ENCODE measurements at regions of chr1 and their contacts with region 1.

Region 1: GRCh38 chr1:63917571-63918417 is 144.0 kb downstream of the ROR1 start:
- DNase-seq: no peak
- H3K4me3 ChIP-seq: no peak overlapping the region
- H3K27ac ChIP-seq: no peak overlapping the region
- H3K4me1 ChIP-seq: peaks cover 17% of the 10 kb centered on the region
- H3K27me3 ChIP-seq: peaks cover 0 to 3% of the 10 kb centered on the region in 2 experiments
- CTCF ChIP-seq: peak; percentile 8 to 10
- POLR2A ChIP-seq: no peak

Region 2: GRCh38 chr1:63674238-63674864 is 243.4 kb before region 1 on chr1:
- CTCF ChIA-PET with region 1: interaction called, 30 read pairs
- POLR2A ChIA-PET with region 1: no interaction called
- dilution Hi-C with region 1: no loop called
- intact Hi-C with region 1: loop called (anchors 1 kb)
- DNase-seq: peak; percentile 74
- H3K4me3 ChIP-seq: no peak overlapping the region
- H3K27ac ChIP-seq: no peak overlapping the region
- H3K4me1 ChIP-seq: no peaks in the 10 kb centered on the region
- H3K27me3 ChIP-seq: peaks cover 0 to 2% of the 10 kb centered on the region in 2 experiments
- CTCF ChIP-seq: peak; percentile 74 to 83
- POLR2A ChIP-seq: no peak

Region 3: DNA sequence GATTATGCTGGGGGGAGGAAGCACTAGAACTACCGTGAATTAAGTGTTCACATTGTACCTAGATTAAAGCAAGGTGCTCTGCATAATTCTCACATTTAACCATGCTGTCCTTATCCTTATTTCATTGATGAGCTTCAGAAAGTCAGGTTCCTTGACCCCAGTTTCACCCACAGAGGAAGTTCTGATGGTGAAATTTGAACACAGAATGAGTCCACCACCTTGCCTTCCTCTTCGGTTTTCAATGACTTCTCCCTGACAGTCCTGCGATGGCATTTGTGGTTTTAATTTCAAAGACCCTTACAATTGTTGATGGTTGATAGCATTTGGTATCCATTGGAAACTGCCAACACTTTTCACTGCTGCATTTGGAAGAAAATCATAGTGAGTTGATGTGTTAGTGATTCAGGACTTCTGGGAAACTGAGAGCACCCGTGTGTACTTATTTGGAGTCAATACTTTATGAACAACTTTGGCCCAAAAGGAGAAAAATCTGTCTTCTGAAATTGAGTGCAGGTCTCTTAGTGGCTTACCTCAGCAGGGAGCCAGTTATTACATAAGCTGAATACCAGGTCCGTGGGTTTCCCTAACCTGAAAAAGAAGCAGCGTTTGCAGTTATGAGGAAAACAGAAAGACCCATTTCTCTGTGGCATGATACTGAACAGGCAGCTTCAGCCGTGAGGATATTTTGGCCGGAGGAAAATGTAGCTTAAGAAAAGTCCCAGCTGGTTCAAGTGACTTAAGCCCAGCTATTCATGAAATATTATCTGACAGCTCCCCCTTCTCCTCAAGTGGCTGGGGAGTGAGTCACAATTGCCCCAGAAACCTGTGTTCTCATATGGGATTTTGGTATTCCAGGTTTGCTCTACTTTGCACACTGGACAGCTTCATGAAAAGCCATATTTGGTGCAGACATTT is 96.4 kb before region 1 on chr1:
- CTCF ChIA-PET with region 1: no interaction called
- POLR2A ChIA-PET with region 1: no interaction called
- dilution Hi-C with region 1: no loop called
- intact Hi-C with region 1: no loop called
- DNase-seq: no peak
- H3K4me3 ChIP-seq: no peak overlapping the region
- H3K27ac ChIP-seq: no peak overlapping the region
- H3K4me1 ChIP-seq: no peaks in the 10 kb centered on the region
- H3K27me3 ChIP-seq: no peaks in the 10 kb centered on the region
- CTCF ChIP-seq: no peak
- POLR2A ChIP-seq: no peak

Region 4: GRCh38 chr1:63902844-63903589 is 14.8 kb before region 1 on chr1:
- CTCF ChIA-PET with region 1: interaction called, 14 read pairs
- POLR2A ChIA-PET with region 1: no interaction called
- dilution Hi-C with region 1: no loop called
- intact Hi-C with region 1: no loop called
- DNase-seq: no peak
- H3K4me3 ChIP-seq: no peak overlapping the region
- H3K27ac ChIP-seq: no peak overlapping the region
- H3K4me1 ChIP-seq: peaks cover 4% of the 10 kb centered on the region
- H3K27me3 ChIP-seq: no peaks in the 10 kb centered on the region
- CTCF ChIP-seq: no peak
- POLR2A ChIP-seq: no peak

Region 5: DNA sequence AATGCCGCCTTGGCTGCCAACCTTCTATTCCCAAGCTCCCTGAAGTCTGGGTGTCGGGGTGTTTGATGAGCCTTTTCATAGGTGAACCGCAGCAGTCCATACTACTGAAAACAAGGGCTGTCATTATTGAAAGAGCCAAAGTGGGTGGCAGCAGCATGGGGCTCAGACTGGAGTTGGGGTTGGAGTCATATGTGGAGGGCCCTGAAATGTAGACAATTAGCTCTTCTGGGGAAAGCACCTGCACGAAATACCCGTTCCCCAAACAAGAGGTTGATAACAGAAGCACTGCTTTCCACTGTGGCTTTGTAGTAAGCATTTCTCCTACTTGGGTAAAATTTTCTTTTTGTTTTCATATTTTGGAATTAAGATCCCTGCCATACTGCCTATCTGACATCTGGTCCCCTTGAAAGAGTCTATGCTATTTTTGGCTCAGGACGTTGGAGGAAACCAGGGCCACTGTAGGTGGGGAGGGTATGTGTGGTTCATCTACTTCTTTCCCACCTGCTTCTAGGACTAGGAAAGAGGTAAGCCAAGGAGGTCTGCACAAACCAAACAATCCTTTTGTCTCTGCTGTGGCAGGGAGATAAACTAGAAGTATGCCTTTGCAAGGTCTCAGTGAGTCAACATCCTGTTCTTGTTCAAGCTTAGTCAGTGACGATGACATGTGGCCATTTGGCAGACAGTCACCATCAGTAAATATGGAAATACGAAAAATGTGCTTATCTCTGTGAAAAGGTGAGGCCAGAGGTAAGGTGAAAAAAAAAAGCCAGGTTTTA is 88.7 kb after region 1 on chr1:
- CTCF ChIA-PET with region 1: interaction called, 3 read pairs
- POLR2A ChIA-PET with region 1: no interaction called
- dilution Hi-C with region 1: no loop called
- intact Hi-C with region 1: loop called (anchors 5 kb)
- DNase-seq: peak; percentile 84
- H3K4me3 ChIP-seq: no peak overlapping the region
- H3K27ac ChIP-seq: peak overlapping the region; percentile 57
- H3K4me1 ChIP-seq: peaks cover 14% of the 10 kb centered on the region
- H3K27me3 ChIP-seq: peaks cover 0 to 1% of the 10 kb centered on the region in 2 experiments
- CTCF ChIP-seq: no peak
- POLR2A ChIP-seq: no peak

Region 6: GRCh38 chr1:64019818-64020217 is 102.0 kb after region 1 on chr1:
- CTCF ChIA-PET with region 1: no interaction called
- POLR2A ChIA-PET with region 1: no interaction called
- dilution Hi-C with region 1: no loop called
- intact Hi-C with region 1: no loop called
- DNase-seq: no peak
- H3K4me3 ChIP-seq: no peak overlapping the region
- H3K27ac ChIP-seq: no peak overlapping the region
- H3K4me1 ChIP-seq: no peaks in the 10 kb centered on the region
- H3K27me3 ChIP-seq: no peaks in the 10 kb centered on the region
- CTCF ChIP-seq: no peak
- POLR2A ChIP-seq: no peak

Measured in endothelial cell of umbilical vein (primary cell).